GM12878 (cell line): ENCODE measurements at regions of chr17 and their contacts with region 1.

Region 1: GRCh38 chr17:80426681-80427326 is 11.8 kb downstream of the ENDOV start:
- DNase-seq: peak; percentile 12
- ATAC-seq: peak; percentile 99
- H3K4me3 ChIP-seq: no peak overlapping the region
- H3K27ac ChIP-seq: no peak overlapping the region
- H3K4me1 ChIP-seq: peaks cover 3% of the 10 kb centered on the region
- H3K27me3 ChIP-seq: no peaks in the 10 kb centered on the region
- CTCF ChIP-seq: peak; percentile 95 to 99 (median 98); a peak in 5 of 6 replicates
- EP300 ChIP-seq: no peak
- POLR2A ChIP-seq: no peak
- RAD21 ChIP-seq: peak; percentile 97

Region 2: DNA sequence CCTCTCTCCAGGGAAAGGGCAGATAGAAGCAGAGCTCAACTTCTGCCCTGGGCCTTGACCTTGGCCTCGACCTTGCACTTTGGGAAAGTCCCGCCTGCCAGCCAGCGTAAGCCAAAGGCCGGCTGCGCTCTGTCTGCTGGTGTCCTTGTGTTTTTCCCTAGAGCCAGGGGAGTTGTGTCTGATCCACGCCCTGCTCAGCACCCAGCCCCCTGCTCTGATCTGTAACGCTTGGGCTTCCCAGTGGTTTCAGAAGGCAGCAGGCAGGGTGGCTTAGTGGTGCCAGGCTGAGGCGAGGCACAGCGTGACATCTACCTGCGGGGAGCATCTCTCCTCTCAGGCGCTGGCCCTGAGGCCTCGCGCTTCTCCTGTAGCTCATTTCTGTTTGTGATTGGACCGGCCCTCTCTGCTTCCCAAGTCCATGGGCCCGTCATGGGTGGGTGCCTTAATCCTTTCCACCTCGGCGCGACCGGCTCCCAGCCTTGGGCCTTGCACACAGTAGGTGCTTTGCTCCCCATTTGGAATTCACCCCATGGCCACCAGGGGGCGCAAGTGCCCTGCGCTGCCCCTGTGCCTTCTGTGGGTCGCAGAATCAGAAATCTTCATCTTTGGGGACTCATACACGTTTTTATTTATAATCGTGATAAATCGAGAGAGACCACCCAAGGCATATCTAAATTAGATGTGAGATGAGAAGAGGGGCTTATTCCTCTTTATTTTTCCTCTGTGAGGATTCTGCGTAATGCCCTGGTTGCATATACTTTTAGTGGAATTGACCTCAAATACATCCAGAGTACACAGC is 230.9 kb before region 1 on chr17:
- CTCF ChIA-PET with region 1: interaction called, 11 read pairs
- POLR2A ChIA-PET with region 1: no interaction called
- RAD21 ChIA-PET with region 1: no interaction called
- SMC1A ChIA-PET with region 1: no interaction called
- in situ Hi-C with region 1: no loop called
- intact Hi-C with region 1: no loop called
- DNase-seq: no peak
- ATAC-seq: peak; percentile 71
- H3K4me3 ChIP-seq: no peak overlapping the region
- H3K27ac ChIP-seq: no peak overlapping the region
- H3K4me1 ChIP-seq: no peaks in the 10 kb centered on the region
- H3K27me3 ChIP-seq: no peaks in the 10 kb centered on the region
- CTCF ChIP-seq: peak; percentile 87 to 96 (median 88)
- EP300 ChIP-seq: no peak
- POLR2A ChIP-seq: no peak
- RAD21 ChIP-seq: peak; percentile 94

Region 3: DNA sequence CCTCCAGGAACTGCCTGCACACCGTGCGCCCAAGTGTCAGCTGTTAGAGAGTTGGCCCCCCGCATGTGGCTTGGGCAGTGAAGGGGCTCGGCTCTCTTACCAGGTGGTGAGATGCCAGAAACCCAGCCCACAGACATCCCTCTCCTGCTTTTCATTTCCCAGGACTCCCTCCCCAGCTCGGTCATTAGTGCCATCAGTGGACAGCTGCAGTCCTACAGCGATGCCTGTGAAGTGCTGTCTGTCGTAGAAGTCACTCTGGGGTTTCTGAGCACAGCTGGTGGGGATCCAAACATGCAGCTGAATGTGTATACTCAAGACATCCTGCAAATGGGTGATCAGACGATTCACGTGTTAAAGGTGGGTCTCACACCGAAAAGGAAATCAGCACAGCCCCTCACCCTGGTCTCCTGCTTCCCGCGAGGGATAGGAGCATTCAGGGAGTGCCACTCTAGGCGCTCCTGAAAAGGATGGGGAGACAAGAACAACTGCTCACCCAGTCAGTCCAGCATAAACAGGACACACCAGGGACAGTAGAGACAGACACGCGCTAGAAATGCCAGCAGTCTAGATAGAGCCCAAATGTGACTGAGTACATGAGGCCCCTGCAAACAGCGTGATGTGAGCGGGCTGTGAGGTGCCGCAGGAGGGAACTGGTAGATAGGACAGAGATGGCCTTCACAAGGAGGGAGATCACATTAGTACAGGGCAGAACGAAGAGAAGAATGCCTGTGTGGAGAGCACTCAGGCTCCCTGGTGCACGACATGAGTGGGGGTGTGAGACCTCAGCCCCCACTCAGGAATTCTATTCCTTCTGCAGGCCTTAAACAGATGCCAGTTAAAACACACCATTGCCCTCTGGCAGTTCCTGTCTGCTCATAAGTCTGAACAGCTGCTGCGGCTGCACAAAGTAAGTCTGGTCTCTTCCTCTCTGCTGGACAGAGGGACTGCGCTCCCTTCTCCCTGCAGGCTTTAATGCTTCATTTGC is 37.5 kb before region 1 on chr17:
- CTCF ChIA-PET with region 1: no interaction called
- POLR2A ChIA-PET with region 1: no interaction called
- RAD21 ChIA-PET with region 1: no interaction called
- SMC1A ChIA-PET with region 1: no interaction called
- in situ Hi-C with region 1: no loop called
- intact Hi-C with region 1: no loop called
- DNase-seq: no peak
- ATAC-seq: no peak
- H3K4me3 ChIP-seq: no peak overlapping the region
- H3K27ac ChIP-seq: no peak overlapping the region
- H3K4me1 ChIP-seq: no peaks in the 10 kb centered on the region
- H3K27me3 ChIP-seq: no peaks in the 10 kb centered on the region
- CTCF ChIP-seq: no peak
- EP300 ChIP-seq: no peak
- POLR2A ChIP-seq: no peak
- RAD21 ChIP-seq: no peak

Region 4: DNA sequence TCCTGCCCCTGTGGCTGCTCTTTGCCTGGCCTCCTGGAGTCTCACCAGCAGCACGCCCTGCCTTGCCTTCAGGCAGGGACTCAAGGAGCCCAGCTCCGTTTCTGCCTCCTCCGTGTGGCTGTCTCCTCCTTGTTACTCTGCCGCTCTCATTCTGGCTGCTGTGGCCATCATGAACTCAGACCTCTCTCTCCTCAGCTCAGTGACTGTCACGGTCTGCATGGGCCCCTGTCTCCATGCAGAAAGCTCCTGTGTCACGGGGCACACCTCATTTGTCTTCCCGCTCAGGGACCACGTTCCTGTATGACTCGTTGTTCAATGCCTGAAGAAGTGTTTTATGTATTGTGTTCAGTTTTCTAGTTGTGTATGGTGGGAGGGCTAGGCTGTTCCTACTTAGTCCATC is 143.1 kb after region 1 on chr17:
- CTCF ChIA-PET with region 1: interaction called, 61 read pairs
- POLR2A ChIA-PET with region 1: no interaction called
- RAD21 ChIA-PET with region 1: interaction called, 13 read pairs
- SMC1A ChIA-PET with region 1: interaction called, 15 read pairs
- in situ Hi-C with region 1: loop called (anchors 5 kb)
- intact Hi-C with region 1: loop called (anchors 1 kb)
- DNase-seq: no peak
- ATAC-seq: no peak
- H3K4me3 ChIP-seq: no peak overlapping the region
- H3K27ac ChIP-seq: no peak overlapping the region
- H3K4me1 ChIP-seq: no peaks in the 10 kb centered on the region
- H3K27me3 ChIP-seq: no peaks in the 10 kb centered on the region
- CTCF ChIP-seq: no peak
- EP300 ChIP-seq: no peak
- POLR2A ChIP-seq: no peak
- RAD21 ChIP-seq: no peak

Region 5: GRCh38 chr17:80737106-80738019 is 310.6 kb after region 1 on chr17:
- CTCF ChIA-PET with region 1: interaction called, 6 read pairs
- POLR2A ChIA-PET with region 1: no interaction called
- RAD21 ChIA-PET with region 1: no interaction called
- SMC1A ChIA-PET with region 1: interaction called, 5 read pairs
- in situ Hi-C with region 1: no loop called
- intact Hi-C with region 1: loop called (anchors 10 kb)
- DNase-seq: peak; percentile 81
- ATAC-seq: peak; percentile 95
- H3K4me3 ChIP-seq: peak overlapping the region; percentile 51; the same call in 1 of the 2 replicates
- H3K27ac ChIP-seq: peak overlapping the region; percentile 76
- H3K4me1 ChIP-seq: peaks cover 28% of the 10 kb centered on the region
- H3K27me3 ChIP-seq: no peaks in the 10 kb centered on the region
- CTCF ChIP-seq: peak; percentile 41 to 44 (median 41); a peak in 5 of 6 replicates
- EP300 ChIP-seq: peak; percentile 45 to 93
- POLR2A ChIP-seq: 0 out of 2 replicates have a peak, but pooled peaks have one; percentile 33
- RAD21 ChIP-seq: peak; percentile 46

Region 6: DNA sequence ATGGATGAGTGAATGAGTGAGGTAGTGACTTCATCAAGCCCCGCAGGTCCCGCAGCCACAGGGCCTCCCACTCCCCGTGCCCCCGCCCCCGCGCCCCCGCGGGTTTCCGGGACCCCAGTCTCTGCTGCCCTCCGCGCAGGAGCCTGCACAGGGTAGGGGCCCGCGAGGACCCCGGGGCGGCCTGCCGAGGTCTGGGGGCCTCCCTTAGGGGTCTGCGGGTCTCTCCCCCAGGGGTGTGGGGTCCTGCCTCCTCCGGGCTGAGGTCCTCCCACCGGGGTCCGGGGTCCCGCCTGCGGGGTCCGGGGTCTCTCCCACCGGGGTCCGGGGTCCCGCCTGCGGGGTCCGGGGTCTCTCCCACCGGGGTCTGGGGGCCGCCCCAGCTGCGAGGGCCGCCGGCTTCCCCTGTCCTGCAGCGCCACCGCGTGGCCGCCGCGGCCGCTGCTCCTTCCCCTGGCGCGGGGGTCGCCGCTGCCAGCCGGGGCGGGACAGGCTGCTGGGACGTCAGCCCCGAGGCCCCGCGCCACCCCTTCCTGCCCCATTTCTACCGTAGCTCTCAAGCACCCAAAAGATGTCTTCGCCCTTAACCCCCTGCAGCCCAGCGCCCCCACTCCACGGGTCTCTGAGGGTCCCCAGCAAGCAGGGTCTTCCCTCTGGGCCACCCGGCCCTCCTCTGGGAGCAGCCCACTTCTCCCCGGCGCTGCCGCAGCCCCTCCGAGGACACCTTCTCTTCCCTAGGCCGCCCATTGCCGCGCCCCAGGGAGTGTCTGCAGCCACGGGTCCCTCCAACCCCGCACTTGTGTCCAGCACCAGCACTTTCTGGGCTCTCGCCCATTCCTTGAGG is 554.5 kb after region 1 on chr17:
- CTCF ChIA-PET with region 1: interaction called, 10 read pairs
- POLR2A ChIA-PET with region 1: no interaction called
- RAD21 ChIA-PET with region 1: interaction called, 5 read pairs
- SMC1A ChIA-PET with region 1: no interaction called
- in situ Hi-C with region 1: loop called (anchors 5 kb)
- intact Hi-C with region 1: loop called (anchors 2 kb)
- DNase-seq: no peak
- ATAC-seq: peak; percentile 90
- H3K4me3 ChIP-seq: no peak overlapping the region
- H3K27ac ChIP-seq: no peak overlapping the region
- H3K4me1 ChIP-seq: no peaks in the 10 kb centered on the region
- H3K27me3 ChIP-seq: peaks cover 0 to 3% of the 10 kb centered on the region in 2 experiments; a peak in 1 of 4 replicates
- CTCF ChIP-seq: peak; percentile 49 to 60 (median 55); a peak in 5 of 6 replicates
- EP300 ChIP-seq: no peak
- POLR2A ChIP-seq: no peak
- RAD21 ChIP-seq: peak; percentile 72